ENCODE measurements at regions of chr11 and their contacts with region 1.

Region 1: GRCh38 chr11:17230867-17231851 is 23.4 kb upstream of the PIK3C2A start:
- DNase-seq: peak; percentile 67
- H3K4me3 Mint-ChIP-seq: no peak overlapping the region
- H3K27ac Mint-ChIP-seq: no peak overlapping the region
- H3K4me1 Mint-ChIP-seq: peaks cover 19% of the 10 kb centered on the region
- H3K27me3 Mint-ChIP-seq: peaks cover 7% of the 10 kb centered on the region

Region 2: DNA sequence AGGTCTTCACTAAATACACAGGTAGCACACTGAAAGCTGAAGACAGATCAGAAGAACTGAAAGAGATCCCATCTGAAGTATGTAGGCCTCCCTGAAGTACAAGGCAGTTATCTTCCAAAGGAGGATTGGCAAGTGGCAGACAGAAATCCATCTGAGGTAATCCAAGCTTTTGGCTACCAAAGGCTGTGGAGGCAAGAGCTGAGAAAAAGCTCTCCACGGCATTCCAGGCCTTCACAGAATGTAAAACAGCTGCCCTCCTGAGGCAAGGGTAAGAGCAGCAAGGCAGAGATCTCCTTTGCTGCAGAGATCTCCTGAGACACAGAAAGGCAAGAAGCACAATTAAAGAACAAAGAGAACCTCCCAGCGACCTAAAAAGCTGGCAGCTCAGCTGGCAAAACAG is 42.5 kb before region 1 on chr11:
- CTCF ChIA-PET with region 1: no interaction called
- intact Hi-C with region 1: no loop called
- DNase-seq: no peak
- H3K4me3 Mint-ChIP-seq: no peak overlapping the region
- H3K27ac Mint-ChIP-seq: no peak overlapping the region
- H3K4me1 Mint-ChIP-seq: peaks cover 7% of the 10 kb centered on the region
- H3K27me3 Mint-ChIP-seq: no peaks in the 10 kb centered on the region

Region 3: DNA sequence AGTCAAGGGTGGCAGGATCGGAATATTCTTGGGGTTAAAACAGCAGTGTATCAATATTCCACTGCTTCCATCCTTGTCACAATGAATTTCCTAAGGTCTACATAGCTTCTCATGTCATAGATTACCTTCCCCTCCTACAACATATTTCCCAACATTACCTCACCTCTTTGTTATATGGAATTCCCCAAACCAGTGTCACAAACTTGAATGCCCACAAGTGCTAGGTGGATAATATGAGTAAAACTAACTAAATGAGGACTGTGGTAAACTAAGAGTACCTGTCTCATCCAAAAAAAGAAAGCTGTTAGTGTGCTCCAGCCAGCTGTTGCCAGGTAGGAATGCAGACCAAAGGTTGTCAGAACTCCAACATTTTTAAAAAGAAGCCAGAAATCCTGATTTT is 28.4 kb after region 1 on chr11:
- CTCF ChIA-PET with region 1: interaction called, 3 read pairs
- intact Hi-C with region 1: loop called (anchors 1 kb)
- DNase-seq: no peak
- H3K4me3 Mint-ChIP-seq: no peak overlapping the region
- H3K27ac Mint-ChIP-seq: no peak overlapping the region
- H3K4me1 Mint-ChIP-seq: peaks cover 21% of the 10 kb centered on the region
- H3K27me3 Mint-ChIP-seq: no peaks in the 10 kb centered on the region

Region 4: DNA sequence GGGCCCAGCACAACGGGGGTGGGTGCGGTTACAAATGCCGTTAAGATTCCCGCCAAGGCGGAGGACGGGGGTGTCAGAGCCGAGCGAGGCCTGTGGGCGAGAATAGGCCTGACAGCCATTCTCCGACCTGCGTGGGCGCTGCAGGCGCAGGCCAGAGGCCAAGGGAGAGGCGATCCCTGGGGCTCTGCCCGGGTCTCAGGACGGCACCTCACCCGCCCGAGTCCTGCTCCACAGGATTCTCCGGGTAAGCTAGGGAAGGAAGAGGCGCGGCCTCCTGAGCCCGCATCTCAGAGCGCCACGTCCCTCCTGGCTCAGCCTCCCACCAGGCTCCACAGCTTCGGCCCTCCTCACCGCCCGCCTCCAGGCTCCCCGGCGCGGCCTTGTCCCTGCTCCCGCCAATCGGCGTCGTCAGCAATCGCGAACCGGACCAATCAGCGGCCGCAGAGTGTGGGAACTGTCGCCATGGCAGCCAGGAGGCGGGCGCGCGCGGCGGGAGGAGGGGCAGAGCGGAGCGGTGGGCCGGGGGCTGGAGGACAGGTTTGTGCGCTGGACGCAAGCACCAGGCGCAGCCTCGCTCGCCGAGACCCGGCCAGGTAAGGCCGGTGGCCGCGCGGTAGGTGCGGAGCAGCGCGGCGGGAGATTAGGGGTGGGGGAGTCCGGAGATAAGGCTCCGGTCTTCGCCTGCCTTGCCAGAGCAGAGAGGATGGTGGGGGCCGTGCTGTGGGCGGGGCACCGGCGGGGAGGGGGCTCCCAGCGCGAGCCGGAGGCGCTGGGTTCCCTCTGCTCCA is 45.3 kb after region 1 on chr11 and contains the start of gene NUCB2:
- CTCF ChIA-PET with region 1: interaction called, 8 read pairs
- intact Hi-C with region 1: loop called (anchors 2 kb)
- DNase-seq: peak; percentile 98
- H3K4me3 Mint-ChIP-seq: peak within 1 kb of the TSS; percentile 75
- H3K27ac Mint-ChIP-seq: peak within 1 kb of the TSS; percentile 83
- H3K4me1 Mint-ChIP-seq: peaks cover 33% of the 10 kb centered on the region
- H3K27me3 Mint-ChIP-seq: no peaks in the 10 kb centered on the region
- total RNA-seq, gene NUCB2: 67.7 to 74.0 TPM

Region 5: GRCh38 chr11:17314232-17314547 is 83.0 kb after region 1 on chr11:
- CTCF ChIA-PET with region 1: interaction called, 10 read pairs
- intact Hi-C with region 1: no loop called
- DNase-seq: no peak
- H3K4me3 Mint-ChIP-seq: no peak overlapping the region
- H3K27ac Mint-ChIP-seq: no peak overlapping the region
- H3K4me1 Mint-ChIP-seq: no peaks in the 10 kb centered on the region
- H3K27me3 Mint-ChIP-seq: no peaks in the 10 kb centered on the region

Region 6: DNA sequence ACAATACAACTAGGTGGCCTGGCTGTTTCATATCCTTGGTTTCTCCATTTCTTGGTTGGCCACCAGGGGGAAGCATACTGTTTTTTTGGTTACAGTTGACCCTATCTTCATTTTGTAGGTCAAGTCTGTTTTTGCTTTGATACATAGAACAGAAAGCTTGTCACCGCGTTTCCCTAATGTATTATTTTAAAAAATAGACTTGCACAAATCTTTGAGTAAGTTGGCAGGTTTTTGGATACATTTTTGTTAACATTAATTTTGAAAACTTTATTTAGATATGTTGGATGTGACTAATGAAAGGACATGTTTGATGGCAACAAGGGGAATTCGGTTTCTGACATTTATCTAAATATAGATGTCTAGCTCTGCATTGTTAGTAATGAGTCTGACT is 123.4 kb after region 1 on chr11:
- CTCF ChIA-PET with region 1: interaction called, 16 read pairs
- intact Hi-C with region 1: loop called (anchors 1 kb)
- DNase-seq: peak; percentile 82
- H3K4me3 Mint-ChIP-seq: peak overlapping the region; percentile 81
- H3K27ac Mint-ChIP-seq: no peak overlapping the region
- H3K4me1 Mint-ChIP-seq: peaks cover 25% of the 10 kb centered on the region
- H3K27me3 Mint-ChIP-seq: peaks cover 7% of the 10 kb centered on the region

Region 7: DNA sequence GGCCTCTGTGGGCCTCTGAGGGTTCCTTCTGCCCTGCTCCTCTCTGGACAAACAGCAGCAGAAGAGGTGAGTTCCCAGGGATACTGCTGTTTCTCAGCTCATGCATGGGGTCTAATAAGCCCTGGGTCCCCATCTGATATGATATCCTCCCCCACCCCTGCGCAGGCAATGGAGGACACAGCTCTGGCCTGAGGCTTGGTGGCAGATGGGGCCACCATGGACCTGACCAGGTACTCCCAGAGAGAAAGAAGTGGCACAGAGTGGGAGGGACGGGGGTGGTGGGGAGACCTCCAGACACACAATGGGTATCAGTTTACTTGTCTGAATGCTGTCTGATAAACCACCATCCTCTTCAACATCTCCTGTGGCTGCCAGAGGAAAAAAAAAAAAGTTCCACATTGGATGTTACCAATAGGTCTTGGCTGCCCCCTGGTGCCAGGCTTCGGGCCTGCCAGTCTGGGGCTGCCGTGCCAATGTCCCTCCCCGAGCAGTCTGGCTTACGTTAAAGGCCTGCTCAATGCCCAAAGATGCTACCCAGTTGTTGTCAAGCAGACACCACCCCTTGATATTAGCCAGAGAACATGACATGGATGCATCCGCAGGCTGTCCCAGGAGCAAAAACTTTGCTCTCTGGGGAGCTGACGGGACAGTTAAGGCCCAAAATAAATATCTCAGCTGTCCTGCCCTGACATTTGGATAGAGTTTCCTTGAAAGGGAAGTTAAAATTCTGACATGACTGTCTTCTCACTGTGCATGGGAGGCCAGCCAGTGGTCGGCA is 273.4 kb after region 1 on chr11:
- CTCF ChIA-PET with region 1: interaction called, 12 read pairs
- intact Hi-C with region 1: loop called (anchors 1 kb)
- DNase-seq: peak; percentile 85
- H3K4me3 Mint-ChIP-seq: no peak overlapping the region
- H3K27ac Mint-ChIP-seq: no peak overlapping the region
- H3K4me1 Mint-ChIP-seq: no peaks in the 10 kb centered on the region
- H3K27me3 Mint-ChIP-seq: peaks cover 4% of the 10 kb centered on the region

Region 8: GRCh38 chr11:17722000-17722643 is 491.0 kb after region 1 on chr11:
- CTCF ChIA-PET with region 1: no interaction called
- intact Hi-C with region 1: loop called (anchors 10 kb)
- DNase-seq: no peak
- H3K4me3 Mint-ChIP-seq: no peak overlapping the region
- H3K27ac Mint-ChIP-seq: no peak overlapping the region
- H3K4me1 Mint-ChIP-seq: no peaks in the 10 kb centered on the region
- H3K27me3 Mint-ChIP-seq: peaks cover 38% of the 10 kb centered on the region